ENCODE measurements at regions of chr12 and their contacts with region 1.

Region 1: GRCh38 chr12:128754275-128754674 is 69.5 kb downstream of the SLC15A4 start:
- DNase-seq: no peak
- H3K4me3 ChIP-seq: no peak overlapping the region
- H3K27ac ChIP-seq: no peak overlapping the region
- H3K4me1 ChIP-seq: no peaks in the 10 kb centered on the region
- H3K27me3 ChIP-seq: peaks cover 0 to 3% of the 10 kb centered on the region in 2 donors
- CTCF ChIP-seq: no peak
- POLR2A ChIP-seq: no peak

Region 2: DNA sequence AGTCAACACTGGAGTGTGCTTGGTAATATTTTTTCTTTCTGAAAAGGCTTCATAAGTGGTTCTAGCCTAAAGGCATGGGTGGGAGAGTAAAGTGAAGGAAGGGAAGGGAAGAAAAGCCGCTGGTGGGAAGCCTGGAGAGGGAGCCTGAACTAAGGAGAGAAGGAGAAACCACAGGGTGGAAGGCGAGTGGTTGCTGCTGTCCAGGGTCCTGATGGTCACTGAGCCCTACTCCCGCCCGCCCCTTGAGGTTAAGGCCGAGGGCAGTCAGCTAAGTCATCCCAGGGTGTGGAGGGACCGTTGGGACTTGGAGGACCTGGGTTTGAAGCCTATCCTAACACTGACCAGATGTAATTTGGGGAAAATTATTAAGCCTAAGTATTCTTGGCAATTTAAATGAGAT is 1772.5 kb after region 1 on chr12:
- intact Hi-C with region 1: loop called (anchors 10 kb)
- DNase-seq: no peak
- H3K4me3 ChIP-seq: no peak overlapping the region
- H3K27ac ChIP-seq: no peak overlapping the region
- H3K4me1 ChIP-seq: no peaks in the 10 kb centered on the region
- H3K27me3 ChIP-seq: no peaks in the 10 kb centered on the region
- CTCF ChIP-seq: no peak
- POLR2A ChIP-seq: no peak